HEK293 (cell line): ENCODE measurements at regions of chr2 and their contacts with region 1.

Region 1: GRCh38 chr2:171893824-171894611 is at the start of gene SLC25A12:
- H3K4me3 ChIP-seq: peak within 1 kb of the TSS; percentile 86
- H3K27ac ChIP-seq: peak within 1 kb of the TSS; percentile 73
- H3K4me1 ChIP-seq: no peaks in the 10 kb centered on the region
- CTCF ChIP-seq: peak; percentile 33; the same call in 1 of the 2 replicates

Region 2: DNA sequence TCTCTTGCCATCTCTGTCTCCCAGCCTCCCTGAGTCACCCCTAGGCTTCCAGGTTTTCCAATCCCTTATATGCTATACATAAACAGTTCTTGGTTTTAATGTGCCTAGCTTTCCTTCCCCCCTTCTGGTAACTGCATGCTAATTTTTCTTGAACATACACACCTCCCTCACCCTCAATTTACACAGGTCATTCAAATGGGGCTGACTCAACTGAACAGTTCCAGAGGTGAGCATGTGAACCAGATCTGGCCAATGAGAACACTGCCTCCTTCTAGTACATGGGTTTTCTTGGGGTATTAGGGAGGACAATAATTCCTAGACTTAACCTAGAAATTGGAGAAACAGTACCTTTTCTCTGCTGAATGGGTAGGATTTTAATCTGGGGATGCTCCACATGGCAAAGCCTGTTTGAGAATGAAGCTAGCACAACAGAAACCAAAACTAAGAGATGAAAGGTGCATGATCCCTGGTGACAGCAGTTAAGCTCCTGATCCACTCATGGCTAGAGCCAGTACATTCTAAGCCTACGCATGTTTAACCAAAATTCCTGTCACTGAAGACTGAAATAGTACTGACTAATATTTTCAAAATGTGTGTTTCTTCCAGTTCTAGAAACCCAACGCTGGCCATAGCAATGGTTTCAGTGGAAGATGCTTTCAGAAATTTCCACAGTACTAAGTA is 11.8 kb before region 1 on chr2:
- CTCF ChIA-PET with region 1: interaction called, 10 read pairs
- POLR2A ChIA-PET with region 1: interaction called, 6 read pairs
- H3K4me3 ChIP-seq: no peak overlapping the region
- H3K27ac ChIP-seq: no peak overlapping the region
- H3K4me1 ChIP-seq: peaks cover 3% of the 10 kb centered on the region; the same call in 1 of the 2 replicates
- CTCF ChIP-seq: no peak

Region 3: DNA sequence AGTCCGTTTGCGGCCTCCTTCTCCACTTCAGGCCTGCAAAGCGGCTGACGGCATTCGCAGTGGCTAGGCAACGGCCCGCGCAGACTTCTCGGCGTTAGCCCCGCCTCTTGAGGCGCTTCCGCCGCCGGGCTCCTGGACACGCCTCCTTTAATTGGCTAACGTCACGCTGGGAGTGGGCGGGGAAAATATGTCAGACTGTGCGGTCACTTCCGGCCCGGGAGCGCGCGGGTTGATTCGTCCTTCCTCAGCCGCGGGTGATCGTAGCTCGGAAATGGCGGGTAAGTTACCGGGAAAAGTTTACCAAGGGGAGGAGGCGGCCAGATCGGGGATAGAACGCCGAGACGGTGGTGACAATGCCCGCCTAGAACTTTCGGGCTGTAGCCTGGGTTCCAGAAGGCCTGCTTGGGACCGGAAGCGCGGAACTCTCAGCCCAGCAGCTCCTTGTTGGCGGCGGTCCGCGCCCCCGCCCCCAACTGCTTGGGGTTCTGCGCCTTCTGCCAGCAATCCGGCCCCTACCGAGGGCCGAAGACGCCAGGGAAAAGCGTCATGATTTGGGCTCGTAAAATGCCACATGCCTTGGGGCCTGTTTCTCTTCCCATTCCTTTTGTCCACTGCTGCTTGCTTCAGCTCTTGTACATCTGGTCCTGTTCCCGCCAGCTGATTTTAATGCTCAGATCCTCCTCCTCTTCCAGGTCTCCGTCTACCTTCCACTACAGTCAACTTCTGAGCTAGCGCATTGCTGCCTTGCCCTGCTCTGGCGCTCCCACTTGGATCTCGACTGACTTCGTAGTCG is 28.4 kb after region 1 on chr2 and contains the start of gene HAT1:
- CTCF ChIA-PET with region 1: interaction called, 4 read pairs
- POLR2A ChIA-PET with region 1: interaction called, 14 read pairs
- H3K4me3 ChIP-seq: peak within 1 kb of the TSS; percentile 84
- H3K27ac ChIP-seq: peak within 1 kb of the TSS; percentile 91
- H3K4me1 ChIP-seq: peaks cover 2% of the 10 kb centered on the region
- CTCF ChIP-seq: peak; percentile 32

Region 4: DNA sequence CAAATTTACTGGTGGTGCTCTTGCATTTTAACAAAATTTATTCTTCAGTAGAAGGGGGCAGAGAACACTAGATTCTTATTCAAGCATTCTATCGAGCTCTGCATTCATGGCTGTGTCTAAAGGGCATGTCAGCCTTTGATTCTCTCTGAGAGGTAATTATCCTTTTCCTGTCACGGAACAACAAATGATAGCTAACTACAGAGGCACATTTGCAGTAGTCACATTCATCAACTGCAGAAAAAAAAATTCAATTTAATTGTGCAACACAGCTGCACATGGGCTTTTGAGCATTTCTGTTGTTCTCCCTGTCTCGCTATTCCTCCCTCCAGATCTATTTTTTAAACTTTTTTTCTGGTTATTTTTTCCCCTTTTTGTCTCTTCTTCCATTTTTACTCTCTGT is 178.3 kb after region 1 on chr2:
- CTCF ChIA-PET with region 1: no interaction called
- POLR2A ChIA-PET with region 1: no interaction called
- H3K4me3 ChIP-seq: no peak overlapping the region
- H3K27ac ChIP-seq: no peak overlapping the region
- H3K4me1 ChIP-seq: peaks cover 6% of the 10 kb centered on the region; the same call in 1 of the 2 replicates
- CTCF ChIP-seq: no peak